Activated CD8-positive, alpha-beta T cell treated with anti-CD3 and anti-CD28 coated beads for 36 hours (primary cell): ENCODE measurements at regions of chr13 and their contacts with region 1.

Region 1: DNA sequence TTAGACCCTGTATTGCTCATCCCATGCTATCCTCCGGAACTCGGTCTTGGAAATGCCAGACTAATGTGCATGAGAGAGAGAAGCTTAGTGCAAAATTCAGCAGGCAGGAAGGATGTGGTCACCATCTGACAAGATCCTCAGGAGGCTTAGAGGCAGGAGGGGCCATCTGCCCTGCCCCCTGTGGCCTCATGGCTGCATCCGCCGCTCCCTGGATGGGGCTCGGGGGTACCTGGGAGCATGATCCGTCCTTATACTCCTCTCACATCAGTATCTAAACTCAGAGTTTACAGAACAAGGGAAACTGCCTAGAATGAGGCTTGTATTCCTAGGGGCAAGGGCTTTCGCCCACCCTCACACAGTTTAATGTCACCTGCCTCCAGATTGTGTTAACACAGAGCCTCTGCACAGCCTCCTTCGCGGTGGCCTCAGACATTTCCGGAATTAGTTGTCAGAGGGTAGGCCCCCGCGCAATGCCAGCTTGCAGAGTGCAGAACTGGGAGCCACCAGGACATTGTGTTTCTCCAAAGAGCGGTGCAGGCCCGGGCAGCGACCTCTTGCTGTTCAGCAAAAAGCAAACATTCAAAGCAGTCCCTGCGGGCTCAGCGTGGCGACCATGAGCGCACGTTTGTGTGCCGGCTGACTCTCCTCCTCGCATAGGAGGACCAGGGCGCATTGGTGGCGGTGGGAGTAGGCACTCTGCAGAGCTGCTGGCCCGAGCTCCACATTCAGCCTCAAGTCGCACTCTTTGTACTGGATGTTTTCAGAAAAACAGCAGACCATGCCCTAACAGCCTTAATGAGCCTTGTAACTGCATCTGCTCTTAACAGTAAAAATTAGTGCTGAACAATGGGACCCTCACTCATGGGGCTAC is 39.1 kb downstream of the GPR12 start:
- DNase-seq: peak; percentile 71
- ATAC-seq: peak; percentile 90
- H3K4me3 Mint-ChIP-seq: peak overlapping the region; percentile 66
- H3K27ac Mint-ChIP-seq: peak overlapping the region; percentile 88
- H3K4me1 Mint-ChIP-seq: peaks cover 27% of the 10 kb centered on the region
- H3K27me3 Mint-ChIP-seq: no peaks in the 10 kb centered on the region
- CTCF ChIP-seq: no peak

Region 2: DNA sequence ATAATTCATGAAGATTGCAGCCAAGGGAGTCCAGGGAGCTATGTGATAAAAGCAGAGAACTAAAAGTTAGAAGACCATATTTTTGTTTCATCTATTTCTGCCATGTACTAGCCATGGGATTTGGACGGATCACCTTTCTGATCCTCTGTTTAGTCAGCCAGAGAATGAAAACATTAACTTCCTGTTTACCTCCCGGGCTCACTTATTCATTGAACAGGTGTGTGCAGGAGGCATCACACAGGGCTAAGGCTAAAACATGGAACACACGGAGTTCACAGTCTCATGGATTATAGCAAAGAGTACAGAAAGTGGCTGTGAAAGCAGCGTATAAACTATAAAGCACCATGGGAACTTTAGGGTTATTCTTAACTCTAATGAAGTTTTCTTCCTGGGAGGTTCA is 57.7 kb before region 1 on chr13:
- CTCF ChIA-PET with region 1: no interaction called
- POLR2A ChIA-PET with region 1: no interaction called
- intact Hi-C with region 1: no loop called
- DNase-seq: no peak
- ATAC-seq: no peak
- H3K4me3 Mint-ChIP-seq: no peak overlapping the region
- H3K27ac Mint-ChIP-seq: no peak overlapping the region
- H3K4me1 Mint-ChIP-seq: no peaks in the 10 kb centered on the region
- H3K27me3 Mint-ChIP-seq: peaks cover 9% of the 10 kb centered on the region
- CTCF ChIP-seq: no peak

Region 3: DNA sequence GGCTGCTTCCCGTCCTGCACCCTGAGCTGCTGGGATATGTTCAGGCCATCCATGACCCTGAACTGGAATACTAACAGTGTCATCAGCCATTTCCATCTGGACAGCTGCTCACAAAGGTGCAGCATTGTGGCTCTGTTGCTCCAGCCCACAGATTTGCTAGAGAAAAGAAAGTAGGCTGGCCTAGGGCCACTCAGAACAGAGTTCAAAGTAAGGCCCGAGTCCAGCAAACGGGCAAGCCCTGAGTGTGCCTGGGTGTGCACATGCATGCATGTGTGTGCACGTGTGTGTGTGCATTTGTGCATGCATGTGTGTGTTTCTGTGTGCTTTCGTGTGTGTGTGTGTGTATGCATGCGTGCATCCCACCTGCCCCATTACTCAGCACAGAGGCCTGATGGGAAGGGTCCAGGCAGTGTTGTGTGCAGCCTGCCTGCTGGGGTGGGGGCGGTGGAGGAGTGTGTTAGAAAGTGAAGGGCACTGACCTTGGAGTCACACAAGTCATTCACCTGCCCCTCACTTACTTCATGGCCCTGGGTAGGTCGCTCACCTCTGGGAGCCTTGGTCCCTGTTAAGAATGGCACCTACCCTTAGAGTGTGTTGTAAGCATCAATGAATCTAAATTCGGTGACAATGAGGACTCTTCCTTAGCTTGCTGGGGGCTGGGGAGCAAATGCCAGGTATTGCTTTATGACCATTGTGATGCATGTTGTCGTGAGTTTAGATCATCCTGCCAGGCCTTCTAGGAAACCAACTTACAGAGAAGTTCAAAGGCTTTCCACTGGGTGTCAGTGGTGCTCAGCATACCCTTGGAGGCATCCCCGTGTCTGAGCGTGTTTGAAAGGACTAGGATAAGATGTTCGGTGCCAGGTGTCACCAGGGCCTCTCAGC is 14.1 kb before region 1 on chr13:
- CTCF ChIA-PET with region 1: interaction called, 26 read pairs
- POLR2A ChIA-PET with region 1: no interaction called
- intact Hi-C with region 1: no loop called
- DNase-seq: peak; percentile 69
- ATAC-seq: peak; percentile 89
- H3K4me3 Mint-ChIP-seq: no peak overlapping the region
- H3K27ac Mint-ChIP-seq: no peak overlapping the region
- H3K4me1 Mint-ChIP-seq: peaks cover 7% of the 10 kb centered on the region
- H3K27me3 Mint-ChIP-seq: no peaks in the 10 kb centered on the region
- CTCF ChIP-seq: peak; percentile 69